Caco-2 (cell line): ENCODE measurements at regions of chr9 and their contacts with region 1.

Region 1: DNA sequence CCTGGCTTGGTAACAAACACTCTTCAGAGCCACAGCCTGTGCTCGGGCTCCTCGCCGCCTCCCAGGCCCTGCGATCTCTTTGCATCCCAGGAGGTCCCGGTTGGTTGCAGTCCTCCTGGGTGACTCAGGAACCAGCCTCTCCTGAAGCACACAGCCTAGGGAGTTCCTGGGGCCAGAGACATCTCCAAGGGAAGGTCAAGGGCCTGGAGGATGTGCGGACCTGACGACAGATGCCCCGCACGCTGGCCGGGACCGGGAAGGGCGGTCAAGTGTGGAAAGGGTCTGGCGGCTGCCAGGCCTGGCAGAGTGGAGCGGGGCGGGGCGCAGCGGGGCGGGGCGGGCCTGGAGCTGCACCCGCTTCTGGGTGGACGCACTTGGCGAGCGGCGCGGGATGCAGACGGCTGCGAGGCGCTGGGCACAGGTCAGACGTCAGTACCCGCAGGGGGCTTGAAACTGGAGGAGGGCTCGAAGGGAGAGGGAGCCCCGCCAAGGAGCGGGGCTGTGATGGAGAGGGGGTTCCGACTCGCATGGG is 45.0 kb upstream of the PRSS3 start:
- DNase-seq: peak; percentile 17 to 42
- H3K4me3 ChIP-seq: peak overlapping the region; percentile 91
- H3K4me3 Mint-ChIP-seq: peak overlapping the region; percentile 74
- H3K27ac Mint-ChIP-seq: peak overlapping the region; percentile 53
- H3K4me1 ChIP-seq: peaks cover 7% of the 10 kb centered on the region; the same call in 1 of the 2 replicates
- H3K4me1 Mint-ChIP-seq: peaks cover 17% of the 10 kb centered on the region
- H3K27me3 ChIP-seq: no peaks in the 10 kb centered on the region
- H3K27me3 Mint-ChIP-seq: no peaks in the 10 kb centered on the region
- CTCF ChIP-seq: no peak

Region 2: GRCh38 chr9:33778700-33779351 is 28.5 kb after region 1 on chr9:
- CTCF ChIA-PET with region 1: interaction called, 9 read pairs
- POLR2A ChIA-PET with region 1: no interaction called
- intact Hi-C with region 1: loop called (anchors 1 kb)
- DNase-seq: peak; percentile 63 to 73
- H3K4me3 ChIP-seq: no peak overlapping the region
- H3K4me3 Mint-ChIP-seq: no peak overlapping the region
- H3K27ac Mint-ChIP-seq: no peak overlapping the region
- H3K4me1 ChIP-seq: no peaks in the 10 kb centered on the region
- H3K4me1 Mint-ChIP-seq: peaks cover 7% of the 10 kb centered on the region
- H3K27me3 ChIP-seq: no peaks in the 10 kb centered on the region
- H3K27me3 Mint-ChIP-seq: no peaks in the 10 kb centered on the region
- CTCF ChIP-seq: peak; percentile 85 to 86